ENCODE measurements at regions of chr6 and their contacts with region 1.

Region 1: GRCh38 chr6:7725849-7726415 is at the start of gene BMP6:
- DNase-seq: no peak
- ATAC-seq: peak; percentile 88
- H3K4me3 ChIP-seq: peak within 1 kb of the TSS; percentile 63
- H3K27ac ChIP-seq: no peak within 1 kb of the TSS
- H3K4me1 ChIP-seq: peaks cover 3% of the 10 kb centered on the region; the same call in 1 of the 2 replicates
- H3K27me3 ChIP-seq: peaks cover 12 to 26% of the 10 kb centered on the region in 2 experiments
- CTCF ChIP-seq: no peak
- EP300 ChIP-seq: no peak
- POLR2A ChIP-seq: no peak
- RAD21 ChIP-seq: no peak
- polyA plus RNA-seq, gene BMP6: 0.02 to 0.11 TPM

Region 2: DNA sequence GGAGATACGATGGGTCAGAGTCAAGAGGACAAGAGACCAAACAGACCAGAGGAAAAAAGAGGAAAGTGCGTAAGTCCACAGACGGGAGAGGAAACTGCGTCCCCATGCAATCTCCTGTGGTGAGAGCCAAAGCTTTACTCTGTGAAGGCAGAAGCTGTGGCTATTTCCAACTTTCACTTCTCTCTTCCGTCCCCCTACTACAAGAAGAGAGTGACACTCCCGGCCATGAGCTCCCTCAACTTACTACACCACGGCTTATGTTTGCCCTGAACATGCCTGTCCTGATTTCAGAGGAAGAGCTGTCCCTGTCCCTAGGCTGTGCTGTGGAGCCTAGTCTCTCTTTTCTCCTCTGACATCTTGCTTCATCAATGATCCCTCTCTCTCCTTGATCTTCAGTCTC is 401.4 kb before region 1 on chr6:
- CTCF ChIA-PET with region 1: no interaction called
- POLR2A ChIA-PET with region 1: no interaction called
- RAD21 ChIA-PET with region 1: no interaction called
- SMC1A ChIA-PET with region 1: no interaction called
- in situ Hi-C with region 1: no loop called
- intact Hi-C with region 1: no loop called
- DNase-seq: no peak
- ATAC-seq: peak; percentile 92
- H3K4me3 ChIP-seq: no peak overlapping the region
- H3K27ac ChIP-seq: no peak overlapping the region
- H3K4me1 ChIP-seq: peaks cover 6% of the 10 kb centered on the region
- H3K27me3 ChIP-seq: no peaks in the 10 kb centered on the region
- CTCF ChIP-seq: no peak
- EP300 ChIP-seq: 0 out of 4 replicates have a peak, but pooled peaks of 1 of the 2 experiments have one; percentile 12
- POLR2A ChIP-seq: no peak
- RAD21 ChIP-seq: no peak

Region 3: DNA sequence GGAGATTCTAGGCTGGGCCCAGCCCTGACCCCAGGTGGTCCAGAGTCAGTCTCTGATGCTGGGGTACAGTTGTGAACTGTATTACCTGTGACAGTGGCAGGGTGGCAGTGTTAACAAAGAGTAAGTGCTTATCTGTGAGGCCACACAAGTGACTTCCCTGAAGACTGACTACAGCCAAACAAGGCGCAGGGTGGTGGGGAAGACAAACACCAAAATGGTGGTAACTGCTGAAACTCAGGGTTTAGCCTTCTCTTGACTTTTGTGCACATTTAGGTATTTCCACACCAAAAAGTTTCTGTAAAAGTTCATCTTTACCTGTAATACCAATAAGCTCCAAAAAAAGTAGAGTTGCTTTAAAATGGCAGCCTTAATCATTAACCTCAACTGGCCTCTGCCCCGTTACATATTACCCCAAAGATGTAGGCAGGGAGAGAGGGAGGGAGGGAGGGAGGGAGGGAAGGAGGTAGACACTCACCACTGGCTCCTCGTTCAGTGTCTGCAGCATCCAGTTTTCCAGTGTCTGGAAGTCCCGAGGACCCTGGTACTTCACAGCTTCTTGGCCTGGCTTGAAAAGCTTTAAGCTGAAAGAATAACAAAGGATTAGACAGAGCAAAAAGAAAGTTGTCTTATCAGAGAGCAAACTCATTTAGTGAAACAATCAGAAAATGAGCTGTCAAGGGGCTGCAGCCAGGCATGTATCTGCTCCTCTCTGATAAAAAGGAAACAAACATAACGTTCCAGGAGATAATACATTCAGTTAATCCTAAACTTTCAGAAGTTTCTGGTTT is 173.4 kb after region 1 on chr6:
- CTCF ChIA-PET with region 1: no interaction called
- POLR2A ChIA-PET with region 1: no interaction called
- RAD21 ChIA-PET with region 1: no interaction called
- SMC1A ChIA-PET with region 1: interaction called, 3 read pairs
- in situ Hi-C with region 1: no loop called
- intact Hi-C with region 1: loop called (anchors 5 kb)
- DNase-seq: no peak
- ATAC-seq: peak; percentile 77
- H3K4me3 ChIP-seq: no peak overlapping the region
- H3K27ac ChIP-seq: no peak overlapping the region
- H3K4me1 ChIP-seq: peaks cover 21% of the 10 kb centered on the region
- H3K27me3 ChIP-seq: no peaks in the 10 kb centered on the region
- CTCF ChIP-seq: peak; percentile 31 to 50 (median 34); a peak in 4 of 6 replicates
- EP300 ChIP-seq: no peak
- POLR2A ChIP-seq: no peak
- RAD21 ChIP-seq: peak; percentile 65

Region 4: GRCh38 chr6:7986219-7986618 is 260.3 kb after region 1 on chr6:
- CTCF ChIA-PET with region 1: interaction called, 32 read pairs
- POLR2A ChIA-PET with region 1: no interaction called
- RAD21 ChIA-PET with region 1: interaction called, 11 read pairs
- SMC1A ChIA-PET with region 1: interaction called, 17 read pairs
- in situ Hi-C with region 1: loop called (anchors 5 kb)
- intact Hi-C with region 1: no loop called
- DNase-seq: no peak
- ATAC-seq: no peak
- H3K4me3 ChIP-seq: no peak overlapping the region
- H3K27ac ChIP-seq: no peak overlapping the region
- H3K4me1 ChIP-seq: no peaks in the 10 kb centered on the region
- H3K27me3 ChIP-seq: no peaks in the 10 kb centered on the region; a peak in 1 of 4 replicates
- CTCF ChIP-seq: no peak
- EP300 ChIP-seq: no peak
- POLR2A ChIP-seq: no peak
- RAD21 ChIP-seq: no peak

Region 5: DNA sequence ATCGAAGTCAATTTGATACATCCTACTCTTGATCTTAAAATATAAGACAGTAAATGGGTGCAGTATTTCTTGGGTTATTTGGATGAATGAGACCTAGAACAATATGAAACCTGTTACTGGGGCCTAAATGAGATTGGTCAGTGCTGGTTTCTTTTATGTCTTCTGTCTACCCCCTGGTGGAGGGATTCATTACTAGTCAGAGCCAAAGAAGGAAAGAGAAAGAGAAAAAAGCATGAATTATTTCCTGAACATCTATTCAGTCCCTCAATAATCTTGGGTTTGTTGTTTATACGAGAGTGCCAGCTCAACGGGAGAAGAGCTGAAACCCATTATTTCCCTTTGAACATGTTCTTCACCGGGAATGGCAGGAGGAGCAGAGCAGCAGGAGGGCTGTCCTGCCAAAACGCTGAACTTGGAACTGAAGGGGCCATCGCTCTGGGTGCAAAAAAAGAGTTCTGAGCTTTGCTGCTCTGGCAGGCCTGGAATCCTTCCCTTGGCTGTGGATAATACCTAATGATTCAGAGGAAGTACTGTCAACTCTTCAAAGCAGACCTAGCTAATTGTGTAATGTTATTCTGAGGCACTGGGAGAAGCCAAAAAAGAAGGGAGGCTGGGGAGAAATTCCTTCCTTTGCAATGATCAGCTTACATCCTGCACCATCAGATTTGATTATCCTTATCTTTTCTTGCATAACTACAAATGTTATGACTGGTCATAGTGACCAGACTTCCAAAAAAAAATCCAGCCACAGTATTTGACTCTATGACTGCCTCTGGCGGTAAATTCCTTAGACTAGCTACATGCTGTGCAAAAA is 266.3 kb after region 1 on chr6:
- CTCF ChIA-PET with region 1: interaction called, 32 read pairs
- POLR2A ChIA-PET with region 1: no interaction called
- RAD21 ChIA-PET with region 1: interaction called, 11 read pairs
- SMC1A ChIA-PET with region 1: interaction called, 17 read pairs
- in situ Hi-C with region 1: loop called (anchors 5 kb)
- intact Hi-C with region 1: loop called (anchors 1 kb)
- DNase-seq: peak; percentile 13
- ATAC-seq: peak; percentile 90
- H3K4me3 ChIP-seq: no peak overlapping the region
- H3K27ac ChIP-seq: no peak overlapping the region
- H3K4me1 ChIP-seq: no peaks in the 10 kb centered on the region
- H3K27me3 ChIP-seq: no peaks in the 10 kb centered on the region; a peak in 1 of 4 replicates
- CTCF ChIP-seq: peak; percentile 37 to 57 (median 38)
- EP300 ChIP-seq: no peak
- POLR2A ChIP-seq: no peak
- RAD21 ChIP-seq: peak; percentile 91

Region 6: DNA sequence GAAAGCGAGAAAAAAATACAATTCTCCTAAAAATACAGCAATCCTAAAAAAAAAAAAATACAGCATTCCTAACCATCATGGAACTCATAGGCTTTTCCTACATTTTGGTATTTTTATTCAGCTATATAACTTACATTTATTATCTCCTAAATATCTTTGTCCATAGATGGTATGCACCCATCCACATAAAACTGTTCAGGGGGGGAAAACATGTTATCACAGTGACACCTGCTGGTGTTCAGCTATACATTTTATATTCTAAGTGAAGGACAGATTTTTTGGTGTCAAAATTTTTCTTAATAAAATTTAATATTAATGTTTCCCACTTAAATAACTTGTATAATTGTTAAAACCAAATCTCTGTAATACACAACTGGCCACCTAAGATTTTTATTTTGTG is 280.3 kb after region 1 on chr6:
- CTCF ChIA-PET with region 1: interaction called, 29 read pairs
- POLR2A ChIA-PET with region 1: no interaction called
- RAD21 ChIA-PET with region 1: interaction called, 12 read pairs
- SMC1A ChIA-PET with region 1: interaction called, 10 read pairs
- in situ Hi-C with region 1: no loop called
- intact Hi-C with region 1: loop called (anchors 2 kb)
- DNase-seq: no peak
- ATAC-seq: peak; percentile 46; the same call in 1 of the 3 replicates
- H3K4me3 ChIP-seq: no peak overlapping the region
- H3K27ac ChIP-seq: no peak overlapping the region
- H3K4me1 ChIP-seq: no peaks in the 10 kb centered on the region
- H3K27me3 ChIP-seq: no peaks in the 10 kb centered on the region
- CTCF ChIP-seq: peak; percentile 27 to 51 (median 32); a peak in 4 of 6 replicates
- EP300 ChIP-seq: no peak
- POLR2A ChIP-seq: no peak
- RAD21 ChIP-seq: peak; percentile 81

Measured in GM12878 (cell line).